Naive thymus-derived CD4-positive, alpha-beta T cell (primary cell): ENCODE measurements at regions of chr22 and their contacts with region 1.

Region 1: DNA sequence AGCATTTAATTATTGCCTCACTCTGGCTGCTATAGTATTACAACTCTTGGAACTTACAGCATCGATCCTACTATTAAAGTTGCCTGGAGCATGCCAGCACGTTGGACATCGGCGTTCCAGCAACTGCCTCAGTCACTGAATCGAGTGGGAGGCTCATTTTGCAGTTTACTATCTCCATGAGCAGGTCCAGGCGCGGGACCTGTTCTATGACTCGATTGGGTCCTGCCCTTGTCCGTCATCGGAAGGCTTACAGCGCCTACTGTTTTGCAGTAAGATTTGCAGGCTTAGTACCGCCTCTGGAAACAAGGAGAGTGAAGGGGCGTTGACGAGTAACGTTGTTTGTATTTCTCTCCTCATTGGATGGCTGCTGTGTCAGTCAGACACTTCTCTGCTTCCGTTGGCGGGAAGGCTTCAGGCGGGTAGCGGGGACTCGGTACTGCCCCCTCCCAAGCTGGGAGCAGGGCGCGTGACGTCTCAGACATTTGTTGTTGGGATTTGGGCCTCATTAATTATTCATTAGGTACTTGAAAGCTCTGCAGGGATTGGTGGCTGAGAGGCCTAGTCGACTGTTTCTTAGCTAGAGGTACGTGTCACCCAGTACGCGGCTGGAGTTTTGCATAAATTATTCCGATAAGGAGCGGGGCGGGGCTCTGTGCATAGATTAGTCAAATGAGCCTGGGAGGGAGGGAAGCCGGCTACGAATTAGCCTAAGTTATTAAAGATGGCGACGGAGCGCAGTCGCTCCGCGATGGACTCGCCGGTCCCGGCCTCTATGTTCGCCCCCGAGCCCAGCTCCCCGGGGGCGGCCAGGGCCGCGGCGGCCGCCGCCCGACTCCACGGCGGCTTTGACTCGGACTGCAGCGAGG is at the start of gene GTPBP1:
- DNase-seq: peak; percentile 76 to 100 (median 99)
- ATAC-seq: peak; percentile 85
- H3K4me3 ChIP-seq: peak within 1 kb of the TSS; percentile 80
- H3K4me3 Mint-ChIP-seq: peak within 1 kb of the TSS; percentile 71 to 98 (median 93)
- H3K27ac ChIP-seq: peak within 1 kb of the TSS; percentile 90
- H3K27ac Mint-ChIP-seq: peak within 1 kb of the TSS; percentile 80 to 99 (median 98)
- H3K4me1 ChIP-seq: peaks cover 36 to 42% of the 10 kb centered on the region in 2 donors
- H3K4me1 Mint-ChIP-seq: peaks cover 36 to 60% (median 59%) of the 10 kb centered on the region in 7 donors
- H3K27me3 ChIP-seq: no peaks in the 10 kb centered on the region
- H3K27me3 Mint-ChIP-seq: no peaks in the 10 kb centered on the region
- total RNA-seq, gene GTPBP1: 79.1 to 209 (median 91.9) TPM

Region 2: DNA sequence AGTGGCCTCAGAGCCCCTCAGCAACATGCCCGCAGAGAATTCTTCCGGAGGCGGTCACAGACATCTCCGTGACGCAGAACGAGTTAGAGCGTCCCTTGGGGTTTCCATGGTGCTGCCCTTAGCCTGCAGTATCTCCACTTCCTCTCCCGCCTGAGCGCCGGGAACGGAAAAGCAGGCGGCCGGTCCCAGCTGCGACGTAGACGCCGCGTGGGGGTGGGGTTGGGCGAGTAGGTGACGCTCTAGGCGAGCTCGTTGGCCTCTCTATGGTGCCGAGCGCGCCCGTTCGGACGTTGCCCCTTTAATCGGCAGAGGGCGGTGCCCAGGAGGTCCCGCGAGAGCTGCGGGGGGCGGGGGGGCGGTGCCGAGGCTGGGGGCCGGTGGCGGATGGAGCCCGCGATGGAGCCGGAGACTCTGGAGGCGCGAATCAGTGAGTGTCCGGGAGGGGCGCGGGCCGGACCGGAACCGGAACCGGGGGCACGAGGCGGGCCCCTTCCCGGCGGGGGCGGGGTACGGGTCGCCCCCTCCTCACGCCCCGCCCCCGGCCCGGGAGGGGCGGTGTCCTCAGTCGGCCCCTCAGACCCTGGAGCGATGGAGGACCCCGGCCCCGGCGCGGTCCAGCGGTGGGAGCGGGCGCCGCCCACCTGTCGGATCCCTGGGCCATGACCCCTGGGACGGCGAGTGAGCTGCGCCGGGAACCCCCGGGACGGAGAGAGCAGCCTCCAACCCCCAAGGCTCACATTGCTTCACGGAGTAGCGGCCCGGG is 1096.8 kb before region 1 on chr22 and contains the start of gene GGA1:
- CTCF ChIA-PET with region 1: no interaction called
- POLR2A ChIA-PET with region 1: no interaction called
- intact Hi-C with region 1: loop called in 1 of 2 experiments (anchors 5 kb)
- DNase-seq: peak; percentile 92 to 99 (median 97)
- ATAC-seq: peak; percentile 89
- H3K4me3 ChIP-seq: peak within 1 kb of the TSS; percentile 81
- H3K4me3 Mint-ChIP-seq: peak within 1 kb of the TSS; percentile 88 to 97 (median 93)
- H3K27ac ChIP-seq: peak within 1 kb of the TSS; percentile 85
- H3K27ac Mint-ChIP-seq: peak within 1 kb of the TSS; percentile 93 to 99 (median 97)
- H3K4me1 ChIP-seq: peaks cover 46 to 47% of the 10 kb centered on the region in 2 donors
- H3K4me1 Mint-ChIP-seq: peaks cover 36 to 72% (median 57%) of the 10 kb centered on the region in 7 donors
- H3K27me3 ChIP-seq: no peaks in the 10 kb centered on the region
- H3K27me3 Mint-ChIP-seq: peaks cover 0 to 6% (median 0%) of the 10 kb centered on the region in 5 donors
- total RNA-seq, gene GGA1: 64.2 to 124 (median 102) TPM

Region 3: DNA sequence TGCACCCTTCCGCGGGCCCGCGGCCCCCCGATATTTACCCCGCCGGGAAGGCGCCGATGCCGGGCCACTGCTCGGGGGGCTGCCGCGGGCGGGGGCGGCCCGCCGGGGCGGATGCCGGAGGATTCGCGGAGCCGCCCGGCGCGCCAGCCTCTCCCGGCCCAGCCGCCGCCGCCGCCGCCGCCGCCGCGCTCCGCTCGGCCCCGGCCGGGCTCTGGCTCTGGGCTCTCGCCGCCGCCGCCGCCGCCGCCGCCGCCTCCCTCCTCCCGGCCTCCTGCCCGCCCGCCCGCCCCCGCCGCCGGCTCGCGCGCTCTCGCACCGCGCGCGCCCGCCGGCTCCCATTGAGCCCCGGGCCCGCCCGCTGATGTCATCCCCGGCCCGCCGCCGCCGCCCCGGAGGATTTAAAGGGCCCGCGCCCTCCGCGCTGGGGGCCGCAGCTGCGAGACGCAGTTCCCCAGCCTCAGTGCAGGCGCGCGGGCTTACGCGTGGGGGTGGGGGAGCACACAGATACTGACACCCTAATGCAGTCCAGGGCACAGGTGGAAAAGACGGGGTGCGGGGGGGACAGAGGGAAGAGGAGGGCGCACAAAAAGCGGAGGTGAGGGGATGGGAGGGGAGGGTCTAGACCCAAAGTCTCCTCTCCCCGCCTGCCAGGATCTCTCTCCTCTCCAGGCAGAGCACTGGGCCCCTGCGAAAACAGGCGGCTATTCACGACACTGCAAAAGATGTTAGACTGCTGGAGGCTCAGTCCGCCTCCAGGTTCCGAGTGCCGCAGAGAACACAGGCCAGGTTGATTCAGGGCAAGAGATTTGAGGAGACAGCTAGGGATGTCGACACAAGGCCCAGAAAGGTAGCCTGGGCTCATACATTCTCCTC is 388.1 kb before region 1 on chr22 and contains the start of gene CSNK1E:
- CTCF ChIA-PET with region 1: no interaction called
- POLR2A ChIA-PET with region 1: no interaction called
- intact Hi-C with region 1: loop called in 1 of 2 experiments (anchors 5 kb)
- DNase-seq: peak; percentile 67 to 85 (median 74)
- ATAC-seq: peak; percentile 79
- H3K4me3 ChIP-seq: peak within 1 kb of the TSS; percentile 62
- H3K4me3 Mint-ChIP-seq: peak within 1 kb of the TSS; percentile 84 to 92 (median 89)
- H3K27ac ChIP-seq: peak within 1 kb of the TSS; percentile 91
- H3K27ac Mint-ChIP-seq: peak within 1 kb of the TSS; percentile 94 to 97 (median 95)
- H3K4me1 ChIP-seq: peaks cover 28 to 39% of the 10 kb centered on the region in 2 donors
- H3K4me1 Mint-ChIP-seq: peaks cover 31 to 49% (median 42%) of the 10 kb centered on the region in 7 donors
- H3K27me3 ChIP-seq: no peaks in the 10 kb centered on the region
- H3K27me3 Mint-ChIP-seq: no peaks in the 10 kb centered on the region
- total RNA-seq, gene CSNK1E: 71.6 to 143 (median 91.9) TPM

Region 4: GRCh38 chr22:38601221-38601764 is 104.2 kb before region 1 on chr22:
- CTCF ChIA-PET with region 1: no interaction called
- POLR2A ChIA-PET with region 1: no interaction called
- intact Hi-C with region 1: no loop called
- DNase-seq: no peak
- ATAC-seq: no peak
- H3K4me3 ChIP-seq: no peak overlapping the region
- H3K4me3 Mint-ChIP-seq: no peak overlapping the region
- H3K27ac ChIP-seq: no peak overlapping the region
- H3K27ac Mint-ChIP-seq: peak overlapping the region in 1 of 9 donors; percentile 2
- H3K4me1 ChIP-seq: no peaks in the 10 kb centered on the region
- H3K4me1 Mint-ChIP-seq: peaks cover 0 to 1% (median 0%) of the 10 kb centered on the region in 7 donors
- H3K27me3 ChIP-seq: peaks cover 0 to 1% of the 10 kb centered on the region in 2 donors
- H3K27me3 Mint-ChIP-seq: peaks cover 0 to 15% (median 0%) of the 10 kb centered on the region in 5 donors

Region 5: GRCh38 chr22:38656256-38657044 is 49.0 kb before region 1 on chr22 and contains the starts of genes CBY1 and FAM227A:
- CTCF ChIA-PET with region 1: no interaction called
- POLR2A ChIA-PET with region 1: interaction called, 3 read pairs
- intact Hi-C with region 1: loop called (anchors 1 kb)
- DNase-seq: peak; percentile 79 to 94 (median 85)
- ATAC-seq: peak; percentile 92
- H3K4me3 ChIP-seq: peak within 1 kb of the TSS; percentile 98
- H3K4me3 Mint-ChIP-seq: peak within 1 kb of the TSS; percentile 94 to 96 (median 96)
- H3K27ac ChIP-seq: peak within 1 kb of the TSS; percentile 93
- H3K27ac Mint-ChIP-seq: peak within 1 kb of the TSS; percentile 92 to 99 (median 98)
- H3K4me1 ChIP-seq: peaks cover 4 to 9% of the 10 kb centered on the region in 2 donors
- H3K4me1 Mint-ChIP-seq: peaks cover 4 to 23% (median 18%) of the 10 kb centered on the region in 7 donors
- H3K27me3 ChIP-seq: no peaks in the 10 kb centered on the region
- H3K27me3 Mint-ChIP-seq: no peaks in the 10 kb centered on the region
- total RNA-seq, gene CBY1: 12.2 to 39.9 (median 15.2) TPM
- total RNA-seq, gene FAM227A: 0.05 to 1.0 (median 0.30) TPM in 4 of 5 experiments, not detected in the other

Region 6: DNA sequence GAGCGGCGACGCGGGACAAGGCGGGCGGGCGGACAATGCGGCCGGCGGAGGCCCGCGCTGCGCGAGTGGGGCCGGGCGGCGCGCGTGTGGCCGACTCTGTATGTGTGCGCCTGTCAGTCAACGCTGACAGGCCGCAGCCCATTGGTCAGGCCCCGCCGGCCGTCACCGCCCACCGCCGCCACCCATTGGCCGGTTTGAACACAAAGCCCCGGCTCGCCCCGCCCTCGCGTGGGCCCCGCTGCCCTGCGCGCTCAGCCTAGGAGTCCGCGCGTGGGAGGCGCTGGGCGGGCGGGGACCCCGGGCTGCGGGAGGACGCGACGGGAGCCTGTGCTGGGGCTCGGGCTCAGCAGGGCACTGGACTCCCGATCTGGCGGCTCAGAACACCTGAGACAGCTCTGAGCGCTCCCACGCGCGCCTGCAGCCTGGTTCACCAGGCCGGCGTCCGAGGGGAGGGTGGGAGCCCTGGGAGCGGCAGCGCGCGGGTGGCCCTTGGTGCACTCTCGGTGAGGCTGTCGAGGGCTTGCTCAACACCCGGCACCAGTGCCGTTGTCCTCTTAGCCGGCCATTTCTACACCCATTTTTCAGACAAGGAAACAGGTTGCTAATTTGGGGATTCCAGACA is 50.6 kb after region 1 on chr22 and contains the start of gene SUN2:
- CTCF ChIA-PET with region 1: interaction called, 3 read pairs
- POLR2A ChIA-PET with region 1: interaction called, 64 read pairs
- intact Hi-C with region 1: loop called (anchors 1 kb)
- DNase-seq: peak; percentile 89 to 98 (median 92)
- ATAC-seq: peak; percentile 85
- H3K4me3 ChIP-seq: peak within 1 kb of the TSS; percentile 95
- H3K4me3 Mint-ChIP-seq: peak within 1 kb of the TSS; percentile 95 to 99 (median 96)
- H3K27ac ChIP-seq: peak within 1 kb of the TSS; percentile 81
- H3K27ac Mint-ChIP-seq: peak within 1 kb of the TSS; percentile 89 to 100 (median 99)
- H3K4me1 ChIP-seq: peaks cover 48 to 54% of the 10 kb centered on the region in 2 donors
- H3K4me1 Mint-ChIP-seq: peaks cover 42 to 67% (median 62%) of the 10 kb centered on the region in 7 donors
- H3K27me3 ChIP-seq: no peaks in the 10 kb centered on the region
- H3K27me3 Mint-ChIP-seq: no peaks in the 10 kb centered on the region
- total RNA-seq, gene SUN2: 509 to 977 (median 558) TPM

Region 7: DNA sequence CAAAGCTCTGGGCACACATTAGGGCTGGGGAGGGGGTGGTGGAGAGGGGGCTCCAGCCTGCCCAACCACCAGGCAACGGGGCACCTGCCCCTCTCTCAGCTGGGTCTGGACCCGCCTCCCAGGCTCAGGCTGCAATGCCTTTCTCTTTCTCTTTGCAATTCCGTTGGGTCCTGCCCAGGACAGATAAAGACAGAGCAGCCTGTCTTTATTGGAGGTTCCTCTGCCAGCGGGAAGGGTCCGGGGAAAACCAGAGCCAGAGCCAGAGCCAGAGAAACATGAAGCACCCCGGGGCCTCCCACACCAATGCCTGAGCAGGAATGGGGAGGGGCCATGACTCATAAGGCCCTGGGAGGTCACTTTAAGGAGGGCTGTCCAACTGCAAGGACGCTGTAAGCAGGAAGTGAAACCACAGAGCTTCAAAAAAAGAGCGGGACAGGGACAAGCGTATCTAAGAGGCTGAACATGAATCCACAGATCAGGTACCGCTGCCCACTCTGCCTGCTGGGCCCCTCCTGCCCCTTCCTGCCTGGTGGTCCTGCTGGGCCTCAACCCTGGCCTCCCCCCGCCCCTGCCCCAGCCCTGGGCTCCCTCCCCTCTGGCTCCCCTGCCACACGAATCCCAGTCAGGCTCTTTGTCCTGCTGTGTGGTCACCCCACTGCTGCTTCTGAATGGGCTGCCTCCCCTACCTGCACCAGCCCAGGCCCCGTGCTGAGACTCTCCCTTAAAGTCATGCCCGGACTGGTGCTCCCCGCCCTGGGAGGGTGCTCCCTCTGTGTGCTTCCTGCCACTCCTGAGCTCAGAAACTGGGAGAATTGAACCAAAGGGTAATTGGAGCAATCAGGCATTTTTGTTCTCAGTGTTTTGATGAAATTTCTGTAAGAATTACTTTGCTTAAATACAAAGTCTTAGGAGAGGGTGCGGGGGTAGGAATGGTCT is 276.8 kb after region 1 on chr22 and contains the start of gene APOBEC3B:
- CTCF ChIA-PET with region 1: no interaction called
- POLR2A ChIA-PET with region 1: no interaction called
- intact Hi-C with region 1: loop called (anchors 1 to 10 kb)
- DNase-seq: peak in 7 of 9 donors; percentile 15 to 79 (median 28)
- ATAC-seq: peak; percentile 90
- H3K4me3 ChIP-seq: peak within 1 kb of the TSS; percentile 46
- H3K4me3 Mint-ChIP-seq: peak within 1 kb of the TSS; percentile 75 to 90 (median 86)
- H3K27ac ChIP-seq: no peak within 1 kb of the TSS
- H3K27ac Mint-ChIP-seq: peak within 1 kb of the TSS in 5 of 9 donors; percentile 12 to 98 (median 74)
- H3K4me1 ChIP-seq: peaks cover 0 to 8% of the 10 kb centered on the region in 2 donors
- H3K4me1 Mint-ChIP-seq: peaks cover 10 to 47% (median 12%) of the 10 kb centered on the region in 7 donors
- H3K27me3 ChIP-seq: no peaks in the 10 kb centered on the region
- H3K27me3 Mint-ChIP-seq: peaks cover 0 to 3% (median 0%) of the 10 kb centered on the region in 5 donors
- total RNA-seq, gene APOBEC3B: 0.30 to 16.0 (median 7.1) TPM in 4 of 5 experiments, not detected in the other

Region 8: GRCh38 chr22:39954584-39955055 is 1249.2 kb after region 1 on chr22:
- CTCF ChIA-PET with region 1: no interaction called
- POLR2A ChIA-PET with region 1: no interaction called
- intact Hi-C with region 1: no loop called
- DNase-seq: no peak
- ATAC-seq: no peak
- H3K4me3 ChIP-seq: no peak overlapping the region
- H3K4me3 Mint-ChIP-seq: peak overlapping the region in 5 of 10 donors; percentile 19 to 80 (median 38)
- H3K27ac ChIP-seq: peak overlapping the region; percentile 69
- H3K27ac Mint-ChIP-seq: peak overlapping the region in 5 of 9 donors; percentile 85 to 98 (median 94)
- H3K4me1 ChIP-seq: peaks cover 61 to 86% of the 10 kb centered on the region in 2 donors
- H3K4me1 Mint-ChIP-seq: peaks cover 69 to 97% (median 89%) of the 10 kb centered on the region in 7 donors
- H3K27me3 ChIP-seq: no peaks in the 10 kb centered on the region
- H3K27me3 Mint-ChIP-seq: no peaks in the 10 kb centered on the region